ENCODE measurements at regions of chr5 and their contacts with region 1.

Region 1: DNA sequence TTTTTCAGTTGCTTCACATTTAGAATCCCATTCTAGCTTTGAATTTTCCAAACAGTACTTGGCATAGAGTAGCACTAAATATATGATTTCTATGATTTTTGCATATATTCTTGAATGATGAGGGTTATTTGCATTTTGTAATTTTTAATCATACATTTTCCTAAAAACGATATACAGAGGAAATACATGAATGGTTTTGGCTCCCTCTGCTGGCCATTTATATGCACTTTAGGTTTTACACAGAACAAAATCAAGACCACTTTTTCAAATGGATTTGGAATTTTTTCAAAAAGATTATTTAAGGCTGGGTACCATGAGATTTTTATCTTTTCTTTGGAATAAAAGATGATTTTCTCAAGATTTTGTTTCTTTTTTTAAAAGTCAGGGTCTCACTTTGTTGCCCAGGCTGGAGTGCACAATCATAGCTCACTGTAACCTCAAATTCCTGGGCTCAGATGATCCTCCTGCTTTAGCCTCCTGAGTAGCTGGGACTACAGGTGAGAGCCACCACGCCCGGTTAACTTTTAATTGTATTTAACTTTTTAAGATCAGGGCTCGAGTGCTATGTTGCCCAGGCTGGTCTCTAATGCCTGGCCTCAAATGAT is 16.7 kb upstream of the COMMD10 start:
- H3K4me3 ChIP-seq: no peak overlapping the region
- H3K27ac ChIP-seq: no peak overlapping the region
- H3K4me1 ChIP-seq: no peaks in the 10 kb centered on the region
- CTCF ChIP-seq: 0 out of 2 replicates have a peak, but pooled peaks have one; percentile 34

Region 2: DNA sequence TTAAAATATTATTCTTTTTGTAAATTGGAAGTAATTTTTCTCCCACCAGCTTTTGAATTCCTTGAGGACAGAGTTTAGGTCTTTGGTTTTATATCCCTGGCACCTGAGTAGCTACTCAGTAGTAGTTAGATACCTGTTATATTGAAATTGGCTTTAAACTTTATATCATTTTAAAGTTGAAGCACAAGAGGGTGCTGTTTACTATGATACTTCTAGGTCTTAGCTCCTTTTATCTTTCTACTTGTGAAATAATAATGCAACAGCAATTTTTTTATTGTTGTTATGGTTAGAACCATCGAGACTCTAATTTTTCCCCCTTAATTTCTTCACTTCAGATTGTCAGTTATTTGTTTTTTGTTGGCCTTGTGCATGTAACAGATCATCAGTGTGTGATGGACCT is 180.1 kb before region 1 on chr5:
- CTCF ChIA-PET with region 1: interaction called, 13 read pairs
- POLR2A ChIA-PET with region 1: no interaction called
- H3K4me3 ChIP-seq: no peak overlapping the region
- H3K27ac ChIP-seq: no peak overlapping the region
- H3K4me1 ChIP-seq: no peaks in the 10 kb centered on the region
- CTCF ChIP-seq: no peak